ENCODE measurements at regions of chr12 and their contacts with region 1.

Region 1: DNA sequence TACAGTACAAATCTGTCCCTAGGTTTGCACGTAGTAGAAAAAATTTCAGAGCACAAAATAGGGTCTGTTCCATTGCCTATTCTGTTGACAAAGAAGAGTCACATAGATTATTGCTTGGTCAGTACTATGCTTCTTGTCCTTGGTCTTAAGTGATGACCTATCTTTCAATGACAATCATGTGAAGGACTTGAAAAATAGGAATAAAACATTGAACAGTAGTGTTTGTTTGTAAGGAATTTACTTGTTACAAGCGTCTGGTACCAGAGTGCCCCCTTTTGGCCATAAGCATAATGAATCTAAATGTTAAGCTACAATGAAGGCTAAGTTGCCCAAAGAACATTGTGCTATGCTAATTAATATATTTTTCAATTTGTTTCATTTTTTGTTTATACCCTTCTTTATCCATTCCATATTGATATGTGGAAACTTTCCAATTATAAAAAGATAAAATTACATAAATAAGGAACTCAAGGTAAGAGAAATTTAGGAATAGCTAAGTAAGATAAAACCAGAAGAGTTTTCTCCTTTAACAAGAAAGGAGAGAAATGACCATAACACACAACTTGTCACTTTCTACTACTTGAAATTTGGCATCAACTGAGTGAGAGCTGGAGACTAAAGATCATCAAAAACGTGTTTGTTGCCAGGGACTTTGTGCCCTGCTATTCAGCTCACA is 204.7 kb downstream of the EPS8 start:
- DNase-seq: no peak
- H3K4me3 Mint-ChIP-seq: no peak overlapping the region
- H3K27ac Mint-ChIP-seq: no peak overlapping the region
- H3K4me1 Mint-ChIP-seq: peaks cover 18% of the 10 kb centered on the region
- H3K27me3 Mint-ChIP-seq: peaks cover 5% of the 10 kb centered on the region

Region 2: DNA sequence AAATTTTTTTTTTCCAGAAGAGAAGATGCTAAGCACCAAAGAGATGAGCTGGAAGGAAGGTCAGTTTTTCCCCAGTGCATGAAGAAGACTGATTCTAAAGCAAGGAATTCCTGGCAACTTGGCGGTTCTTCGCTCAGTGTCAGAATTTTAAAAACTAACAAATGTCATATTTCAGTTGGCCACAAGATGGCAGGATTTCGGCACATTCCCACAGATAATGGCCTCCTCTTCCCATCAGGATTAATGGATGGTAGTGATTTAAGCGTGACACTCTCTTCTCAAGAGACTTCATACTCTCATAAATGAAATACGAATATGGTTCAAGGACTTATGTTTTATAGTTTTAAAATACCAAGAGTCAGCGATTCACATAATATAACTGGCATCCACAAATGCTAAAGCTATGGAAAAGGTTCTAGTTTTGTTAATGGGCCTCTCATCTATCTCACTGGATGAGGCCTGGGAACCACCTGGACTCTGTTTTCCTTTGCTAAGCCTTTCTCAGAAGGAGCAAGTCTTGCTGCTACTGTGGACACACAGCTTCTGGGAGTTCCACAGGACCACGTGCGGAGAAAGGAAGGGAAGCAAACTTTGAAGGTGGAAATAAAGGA is 308.3 kb before region 1 on chr12:
- intact Hi-C with region 1: loop called (anchors 1 kb)
- DNase-seq: no peak
- H3K4me3 Mint-ChIP-seq: no peak overlapping the region
- H3K27ac Mint-ChIP-seq: no peak overlapping the region
- H3K4me1 Mint-ChIP-seq: peaks cover 6% of the 10 kb centered on the region
- H3K27me3 Mint-ChIP-seq: peaks cover 13% of the 10 kb centered on the region

Region 3: DNA sequence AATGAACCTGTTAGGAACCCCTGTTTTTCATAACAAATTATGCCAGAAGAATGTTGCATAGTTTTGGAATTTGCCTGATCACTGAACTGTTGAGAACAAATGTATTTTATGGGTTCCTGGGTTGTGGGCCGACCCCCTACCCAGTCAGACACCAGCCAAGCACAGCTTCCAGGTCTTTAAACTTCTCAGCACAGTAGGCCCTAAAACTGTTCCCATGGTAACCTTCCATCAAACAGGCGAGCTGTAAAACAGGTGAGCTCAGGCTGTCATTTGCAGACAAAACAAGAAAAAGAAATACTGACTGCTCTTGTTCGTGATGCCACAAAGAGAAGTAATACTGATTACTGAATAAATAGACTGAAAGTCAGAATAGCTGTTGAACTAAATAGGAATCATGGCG is 115.1 kb before region 1 on chr12:
- intact Hi-C with region 1: loop called (anchors 10 kb)
- DNase-seq: no peak
- H3K4me3 Mint-ChIP-seq: no peak overlapping the region
- H3K27ac Mint-ChIP-seq: no peak overlapping the region
- H3K4me1 Mint-ChIP-seq: no peaks in the 10 kb centered on the region
- H3K27me3 Mint-ChIP-seq: peaks cover 27% of the 10 kb centered on the region

Measured in activated T-helper 2 cell treated with anti-CD3 and anti-CD28 coated beads, Interferon-gamma antibody, Interleukin-2, Interleukin-4, amounts not matched to agents 10 μg/mL and 5 μg/mL and 100 μg/mL, durations not matched to agents 14 hours and 24 hours and 36 hours (primary cell).